Right ventricle myocardium inferior (tissue), 1 donor: ENCODE measurements at regions of chr19 and their contacts with region 1.

Region 1: DNA sequence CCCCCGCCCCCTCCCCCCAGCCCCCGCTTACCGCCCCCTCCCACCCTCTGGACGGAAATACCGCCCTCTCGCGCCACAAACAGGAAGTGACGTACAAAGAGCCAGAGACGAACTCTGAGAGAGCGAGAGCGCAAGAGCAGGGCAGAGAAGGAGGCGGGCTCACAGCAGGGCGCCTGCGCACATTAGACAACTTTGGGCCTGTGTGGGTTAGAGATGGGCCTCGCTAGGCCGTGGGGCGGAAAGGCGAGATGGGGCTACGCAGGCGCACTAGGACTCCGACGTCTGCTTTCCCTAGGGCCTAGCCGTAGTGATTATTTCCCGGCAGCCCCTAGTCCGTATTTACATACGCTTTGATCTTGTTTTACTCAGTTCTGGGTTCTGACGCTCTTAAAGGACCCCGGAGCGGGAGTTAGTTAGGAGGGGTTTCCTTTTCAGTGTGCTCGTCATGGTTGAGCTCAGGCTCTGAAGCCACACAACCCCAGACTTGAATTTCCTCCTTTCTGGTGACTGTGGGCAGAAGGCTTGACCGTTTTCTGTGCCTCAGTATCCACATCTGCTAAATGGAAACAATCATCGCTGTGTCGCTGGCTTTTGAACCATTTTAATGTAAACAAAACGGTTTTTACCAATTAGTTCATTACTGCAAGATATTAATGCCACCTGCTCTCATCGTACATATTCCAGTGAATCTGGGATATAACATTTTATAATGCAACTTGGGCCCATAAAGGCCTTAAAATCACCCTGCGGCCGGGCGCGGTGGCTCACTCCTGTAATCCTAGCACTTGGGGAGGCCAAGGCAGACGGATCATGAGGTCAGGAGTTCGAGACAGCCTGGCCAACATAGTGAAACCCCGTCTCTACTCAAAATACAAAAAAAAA is 449 bp upstream of the AKT2 start:
- DNase-seq: peak; percentile 98
- ATAC-seq: peak; percentile 97

Region 2: DNA sequence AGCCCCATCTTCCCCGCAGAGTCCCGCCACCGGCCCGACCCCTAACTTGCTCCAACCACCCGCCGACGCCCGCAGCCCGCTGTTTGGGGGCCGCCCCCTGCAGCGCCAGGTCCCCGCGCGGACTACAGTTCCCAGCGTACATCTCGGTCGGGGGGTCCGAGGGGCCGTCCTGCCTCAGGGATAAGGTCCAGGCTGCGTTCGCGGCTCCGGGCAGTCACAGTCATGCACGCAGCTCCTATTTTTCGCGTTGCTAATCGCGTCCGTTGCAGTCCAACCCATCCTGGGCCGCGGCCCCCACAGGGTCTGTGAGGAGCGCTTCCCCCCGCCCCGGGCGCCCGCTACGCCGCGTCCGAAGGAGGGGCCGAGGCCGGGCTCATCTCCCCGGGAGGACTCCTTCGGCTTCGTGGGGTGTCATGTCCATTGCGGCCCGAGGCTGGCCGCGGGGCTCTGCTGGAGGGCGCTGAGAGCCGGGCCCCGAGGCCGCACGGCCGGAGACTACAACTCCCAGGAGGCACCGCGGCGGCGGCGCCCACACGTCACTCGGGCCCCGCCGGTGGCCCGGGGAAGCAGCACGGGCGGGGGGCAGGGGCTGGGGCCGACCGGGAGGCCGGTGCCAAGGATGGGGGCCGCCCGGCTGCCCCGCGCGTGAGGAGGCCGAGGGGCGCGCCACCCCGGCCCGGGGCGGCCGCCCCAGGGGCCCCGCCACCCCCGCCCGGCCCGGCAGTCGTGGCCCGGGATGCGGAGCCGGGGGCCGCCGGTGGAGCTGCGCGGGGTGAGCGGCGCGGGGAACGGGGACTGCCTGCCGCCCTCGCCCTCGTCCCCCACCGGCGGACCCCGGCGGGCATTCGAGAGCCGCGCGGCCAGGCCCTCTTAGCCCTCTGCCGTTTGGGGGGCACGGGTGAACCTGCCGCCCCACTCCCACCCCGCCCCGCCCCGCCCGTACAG is 94.4 kb before region 1 on chr19 and contains the start of gene MAP3K10:
- intact Hi-C with region 1: loop called (anchors 5 kb)
- DNase-seq: peak; percentile 89
- ATAC-seq: peak; percentile 95
- total RNA-seq, gene MAP3K10: 22.7 TPM

Region 3: DNA sequence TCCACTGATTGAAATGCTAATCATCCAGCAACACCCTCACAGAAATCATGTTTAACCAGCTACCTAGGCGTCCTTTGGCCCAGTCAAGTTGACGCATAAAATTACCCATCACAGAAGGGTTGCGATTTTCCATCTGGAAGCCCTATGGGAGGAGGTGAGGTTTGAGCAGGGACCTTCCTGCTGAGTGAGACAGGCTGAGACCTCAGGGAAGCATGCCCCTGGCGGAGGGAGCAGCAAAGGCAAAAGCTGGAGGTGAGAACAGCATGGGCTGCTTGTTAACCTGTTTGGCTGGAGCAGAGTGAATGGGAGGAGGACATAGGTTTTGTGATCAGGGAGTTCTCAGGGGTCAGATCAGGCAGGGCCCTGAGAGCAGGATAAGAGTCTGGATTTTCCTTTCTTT is 74.7 kb before region 1 on chr19:
- intact Hi-C with region 1: no loop called
- DNase-seq: no peak
- ATAC-seq: no peak

Region 4: GRCh38 chr19:40241809-40242384 is 43.7 kb before region 1 on chr19:
- intact Hi-C with region 1: loop called (anchors 2 kb)
- DNase-seq: peak; percentile 75
- ATAC-seq: peak; percentile 94